Endothelial cell of umbilical vein (primary cell): ENCODE measurements at regions of chr15 and their contacts with region 1.

Region 1: DNA sequence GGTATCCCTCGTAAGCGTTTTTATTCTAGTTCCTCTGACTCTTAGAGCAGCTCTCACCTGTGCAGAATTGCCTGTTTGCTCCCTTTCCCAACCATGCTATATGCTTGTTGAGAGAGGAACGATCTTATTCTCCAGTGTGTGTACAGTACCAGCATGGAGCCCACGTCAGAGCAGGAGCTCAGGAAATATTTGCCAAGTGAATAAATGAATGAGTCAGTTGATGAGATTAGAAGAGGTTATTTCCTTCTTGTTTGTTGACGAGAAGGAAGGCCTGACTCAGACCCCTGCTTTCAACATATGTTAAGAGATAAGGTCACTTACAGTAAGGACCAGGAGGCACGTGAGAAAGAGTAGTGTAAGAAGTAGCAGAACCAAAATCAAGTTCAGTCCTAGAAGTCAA is 106.3 kb upstream of the ABHD17C start:
- DNase-seq: peak; percentile 90
- H3K4me3 ChIP-seq: peak overlapping the region in 1 of 3 experiments; percentile 10
- H3K27ac ChIP-seq: peak overlapping the region; percentile 83
- H3K4me1 ChIP-seq: peaks cover 29% of the 10 kb centered on the region
- H3K27me3 ChIP-seq: no peaks in the 10 kb centered on the region
- CTCF ChIP-seq: no peak
- POLR2A ChIP-seq: peak; percentile 28

Region 2: GRCh38 chr15:80599359-80599758 is 10.6 kb after region 1 on chr15:
- CTCF ChIA-PET with region 1: no interaction called
- POLR2A ChIA-PET with region 1: interaction called, 3 read pairs
- dilution Hi-C with region 1: no loop called
- intact Hi-C with region 1: loop called (anchors 1 kb)
- DNase-seq: peak; percentile 75
- H3K4me3 ChIP-seq: no peak overlapping the region
- H3K27ac ChIP-seq: no peak overlapping the region
- H3K4me1 ChIP-seq: peaks cover 9% of the 10 kb centered on the region
- H3K27me3 ChIP-seq: no peaks in the 10 kb centered on the region
- CTCF ChIP-seq: no peak
- POLR2A ChIP-seq: no peak

Region 3: DNA sequence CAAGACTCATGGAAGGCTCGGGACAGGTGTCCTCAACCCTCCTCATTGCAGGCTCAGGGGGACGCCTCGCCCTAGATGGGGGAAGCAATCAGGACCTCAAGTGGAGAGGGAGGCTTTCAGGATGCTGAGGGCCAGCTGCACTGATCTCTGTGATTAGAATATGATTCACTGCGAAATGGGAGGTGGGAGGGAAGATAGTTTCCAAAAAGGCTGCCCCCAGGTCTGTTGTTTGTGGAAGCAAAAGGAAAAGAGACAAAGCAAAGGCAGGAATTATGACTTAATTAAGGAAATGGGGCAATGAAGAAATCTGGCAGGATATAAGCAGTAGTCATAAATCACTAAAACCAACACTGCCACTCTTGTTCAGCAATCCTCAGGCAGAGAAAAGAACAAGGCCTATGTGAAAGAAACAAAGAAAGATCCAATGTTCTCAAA is 20.7 kb after region 1 on chr15:
- CTCF ChIA-PET with region 1: no interaction called
- POLR2A ChIA-PET with region 1: no interaction called
- dilution Hi-C with region 1: no loop called
- intact Hi-C with region 1: loop called (anchors 1 kb)
- DNase-seq: peak; percentile 87
- H3K4me3 ChIP-seq: no peak overlapping the region
- H3K27ac ChIP-seq: no peak overlapping the region
- H3K4me1 ChIP-seq: peaks cover 21% of the 10 kb centered on the region
- H3K27me3 ChIP-seq: no peaks in the 10 kb centered on the region
- CTCF ChIP-seq: no peak
- POLR2A ChIP-seq: no peak

Region 4: DNA sequence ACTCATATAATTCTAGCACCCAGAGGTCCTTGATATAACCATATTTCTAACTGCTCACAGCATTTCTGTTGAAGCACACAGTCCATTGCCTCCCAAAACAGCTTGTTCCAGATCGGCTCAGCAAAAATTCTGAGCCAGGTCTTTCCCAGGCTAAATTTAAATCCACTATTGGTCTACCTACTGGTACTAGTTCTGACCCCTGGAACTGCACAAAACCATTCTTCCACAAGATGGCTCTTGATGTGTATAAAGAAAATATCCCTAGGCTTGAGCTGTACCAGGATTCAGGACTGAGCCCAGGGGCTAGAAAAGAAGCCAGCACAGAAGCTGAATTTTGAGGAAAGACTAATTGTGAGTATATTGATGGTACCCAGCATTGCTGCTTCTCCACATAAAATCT is 30.9 kb after region 1 on chr15:
- CTCF ChIA-PET with region 1: no interaction called
- POLR2A ChIA-PET with region 1: interaction called, 3 read pairs
- dilution Hi-C with region 1: no loop called
- intact Hi-C with region 1: loop called (anchors 1 kb)
- DNase-seq: no peak
- H3K4me3 ChIP-seq: no peak overlapping the region
- H3K27ac ChIP-seq: no peak overlapping the region
- H3K4me1 ChIP-seq: peaks cover 19% of the 10 kb centered on the region
- H3K27me3 ChIP-seq: no peaks in the 10 kb centered on the region
- CTCF ChIP-seq: no peak
- POLR2A ChIP-seq: no peak

Region 5: DNA sequence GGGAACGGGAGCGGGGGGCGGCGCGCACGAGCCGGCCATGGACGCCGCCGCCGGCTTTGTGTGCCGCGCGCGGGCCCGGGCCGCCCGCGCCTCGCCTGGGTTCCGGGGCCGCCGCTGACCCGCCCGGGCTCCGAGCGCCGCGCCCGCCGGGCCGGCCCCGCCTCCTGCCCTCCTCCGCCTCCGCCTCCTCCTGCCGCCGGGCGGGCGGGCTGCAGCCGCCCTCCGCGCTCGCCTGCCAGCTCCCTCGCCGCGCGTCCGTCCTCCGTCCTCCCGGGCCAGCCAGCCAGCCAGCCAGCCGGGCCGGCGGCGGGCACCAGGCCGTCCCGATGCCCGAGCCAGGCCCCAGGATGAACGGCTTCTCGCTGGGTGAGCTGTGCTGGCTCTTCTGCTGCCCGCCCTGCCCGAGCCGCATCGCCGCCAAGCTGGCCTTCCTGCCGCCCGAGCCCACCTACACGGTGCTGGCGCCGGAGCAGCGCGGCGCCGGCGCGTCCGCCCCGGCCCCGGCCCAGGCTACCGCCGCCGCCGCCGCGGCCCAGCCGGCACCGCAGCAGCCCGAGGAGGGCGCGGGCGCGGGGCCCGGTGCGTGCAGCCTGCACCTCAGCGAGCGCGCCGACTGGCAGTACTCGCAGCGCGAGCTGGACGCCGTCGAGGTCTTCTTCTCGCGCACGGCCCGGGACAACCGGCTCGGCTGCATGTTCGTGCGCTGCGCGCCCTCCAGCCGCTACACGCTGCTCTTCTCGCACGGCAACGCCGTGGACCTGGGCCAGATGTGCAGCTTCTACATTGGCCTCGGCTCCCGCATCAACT is 106.5 kb after region 1 on chr15 and contains the start of gene ABHD17C:
- CTCF ChIA-PET with region 1: interaction called, 3 read pairs
- POLR2A ChIA-PET with region 1: no interaction called
- dilution Hi-C with region 1: no loop called
- intact Hi-C with region 1: loop called (anchors 1 kb)
- DNase-seq: peak; percentile 51
- H3K4me3 ChIP-seq: peak within 1 kb of the TSS; percentile 80 to 96 (median 85)
- H3K27ac ChIP-seq: peak within 1 kb of the TSS; percentile 60
- H3K4me1 ChIP-seq: peaks cover 16% of the 10 kb centered on the region
- H3K27me3 ChIP-seq: no peaks in the 10 kb centered on the region
- CTCF ChIP-seq: no peak
- POLR2A ChIP-seq: peak; percentile 64
- total RNA-seq, gene ABHD17C: 8.2 and 10.9 TPM in 2 replicates